ENCODE measurements at regions of chr11 and their contacts with region 1.

Region 1: GRCh38 chr11:102390667-102391465 is 43.9 kb downstream of the BIRC2 start:
- DNase-seq: no peak
- ATAC-seq: peak; percentile 93
- H3K4me3 ChIP-seq: no peak overlapping the region
- H3K27ac ChIP-seq: no peak overlapping the region
- H3K4me1 ChIP-seq: no peaks in the 10 kb centered on the region; the same call in 1 of the 2 replicates
- H3K27me3 ChIP-seq: no peaks in the 10 kb centered on the region
- CTCF ChIP-seq: peak; percentile 82 to 91 (median 89)
- EP300 ChIP-seq: no peak
- POLR2A ChIP-seq: no peak
- RAD21 ChIP-seq: peak; percentile 76

Region 2: GRCh38 chr11:102287964-102288724 is 102.7 kb before region 1 on chr11:
- CTCF ChIA-PET with region 1: interaction called, 21 read pairs
- POLR2A ChIA-PET with region 1: interaction called, 4 read pairs
- RAD21 ChIA-PET with region 1: interaction called, 6 read pairs
- SMC1A ChIA-PET with region 1: interaction called, 15 read pairs
- in situ Hi-C with region 1: no loop called
- intact Hi-C with region 1: no loop called
- DNase-seq: peak; percentile 78
- ATAC-seq: peak; percentile 94
- H3K4me3 ChIP-seq: peak overlapping the region; percentile 43; the same call in 1 of the 2 replicates
- H3K27ac ChIP-seq: no peak overlapping the region
- H3K4me1 ChIP-seq: no peaks in the 10 kb centered on the region
- H3K27me3 ChIP-seq: no peaks in the 10 kb centered on the region
- CTCF ChIP-seq: peak; percentile 62 to 83 (median 67)
- EP300 ChIP-seq: no peak
- POLR2A ChIP-seq: no peak
- RAD21 ChIP-seq: peak; percentile 84

Region 3: DNA sequence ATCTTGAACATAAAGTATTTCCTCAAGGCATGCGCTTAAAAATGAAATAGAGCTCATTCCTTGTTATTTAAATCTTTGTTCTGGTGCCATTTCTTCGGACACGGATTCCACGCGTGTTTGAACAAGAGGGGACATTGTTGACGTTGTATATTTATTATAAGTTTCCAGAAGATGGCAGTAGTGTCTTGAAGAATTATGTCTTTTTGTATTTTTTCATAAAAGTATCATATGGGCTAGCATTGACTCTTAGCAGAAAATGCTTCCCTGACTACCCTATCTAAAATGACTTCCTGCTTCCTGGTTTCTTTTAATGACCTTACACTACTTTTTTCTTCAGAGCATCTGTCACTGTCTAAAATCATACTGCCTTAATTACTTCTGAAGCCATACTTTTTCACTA is 23.5 kb before region 1 on chr11:
- CTCF ChIA-PET with region 1: interaction called, 33 read pairs
- POLR2A ChIA-PET with region 1: no interaction called
- RAD21 ChIA-PET with region 1: interaction called, 7 read pairs
- SMC1A ChIA-PET with region 1: interaction called, 7 read pairs
- in situ Hi-C with region 1: no loop called
- intact Hi-C with region 1: no loop called
- DNase-seq: no peak
- ATAC-seq: peak; percentile 58
- H3K4me3 ChIP-seq: no peak overlapping the region
- H3K27ac ChIP-seq: no peak overlapping the region
- H3K4me1 ChIP-seq: peaks cover 11% of the 10 kb centered on the region; the same call in 1 of the 2 replicates
- H3K27me3 ChIP-seq: no peaks in the 10 kb centered on the region
- CTCF ChIP-seq: peak; percentile 2 to 25 (median 17); a peak in 2 of 6 replicates
- EP300 ChIP-seq: no peak
- POLR2A ChIP-seq: no peak
- RAD21 ChIP-seq: peak; percentile 40; the same call in 1 of the 2 replicates

Region 4: DNA sequence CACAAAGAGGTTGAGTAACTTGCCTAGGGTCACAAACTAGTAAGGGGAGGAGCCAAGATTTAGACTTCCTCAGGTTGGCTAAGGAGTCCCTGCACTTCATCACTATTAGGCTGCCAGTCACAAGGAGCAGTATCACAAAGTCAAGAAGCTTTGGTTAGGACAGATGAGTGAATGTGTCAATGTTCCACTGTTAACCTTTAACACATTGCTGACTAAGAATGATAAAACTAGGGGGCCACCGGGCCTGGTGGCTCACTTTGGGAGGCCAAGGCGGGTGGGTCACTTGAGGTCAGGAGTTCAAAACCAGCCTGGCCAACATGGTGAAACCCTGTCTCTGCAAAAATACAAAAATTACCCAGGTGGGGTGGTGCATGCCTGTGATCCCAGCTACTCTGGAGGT is 29.7 kb after region 1 on chr11:
- CTCF ChIA-PET with region 1: interaction called, 18 read pairs
- POLR2A ChIA-PET with region 1: interaction called, 6 read pairs
- RAD21 ChIA-PET with region 1: interaction called, 8 read pairs
- SMC1A ChIA-PET with region 1: interaction called, 6 read pairs
- in situ Hi-C with region 1: no loop called
- intact Hi-C with region 1: no loop called
- DNase-seq: peak; percentile 40
- ATAC-seq: peak; percentile 83
- H3K4me3 ChIP-seq: no peak overlapping the region
- H3K27ac ChIP-seq: no peak overlapping the region
- H3K4me1 ChIP-seq: peaks cover 4% of the 10 kb centered on the region; the same call in 1 of the 2 replicates
- H3K27me3 ChIP-seq: no peaks in the 10 kb centered on the region
- CTCF ChIP-seq: no peak
- EP300 ChIP-seq: no peak
- POLR2A ChIP-seq: no peak
- RAD21 ChIP-seq: no peak

Region 5: DNA sequence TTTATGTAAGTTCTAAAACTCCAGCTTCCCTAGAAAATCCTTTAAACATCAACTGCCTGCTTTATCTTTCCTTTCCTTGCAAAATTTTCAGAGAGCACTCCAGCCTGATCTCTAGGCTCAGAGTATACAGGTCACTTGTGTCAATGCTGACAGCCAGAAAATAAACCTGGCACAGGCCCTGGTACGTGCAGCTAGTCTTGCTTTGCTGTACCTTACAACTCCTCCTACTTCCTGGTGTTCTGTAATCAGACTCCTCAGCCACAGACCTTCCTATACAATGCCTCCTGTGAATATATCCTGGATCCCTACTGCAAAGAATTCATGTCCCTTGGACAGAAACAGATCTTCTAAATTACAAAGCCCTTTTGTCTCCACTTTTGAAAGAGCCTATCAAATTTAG is 85.9 kb after region 1 on chr11:
- CTCF ChIA-PET with region 1: interaction called, 21 read pairs
- POLR2A ChIA-PET with region 1: no interaction called
- RAD21 ChIA-PET with region 1: interaction called, 7 read pairs
- SMC1A ChIA-PET with region 1: interaction called, 14 read pairs
- in situ Hi-C with region 1: loop called (anchors 25 kb)
- intact Hi-C with region 1: no loop called
- DNase-seq: no peak
- ATAC-seq: peak; percentile 29
- H3K4me3 ChIP-seq: no peak overlapping the region
- H3K27ac ChIP-seq: no peak overlapping the region
- H3K4me1 ChIP-seq: peaks cover 22% of the 10 kb centered on the region
- H3K27me3 ChIP-seq: no peaks in the 10 kb centered on the region
- CTCF ChIP-seq: no peak
- EP300 ChIP-seq: no peak
- POLR2A ChIP-seq: no peak
- RAD21 ChIP-seq: no peak

Region 6: GRCh38 chr11:102546923-102547471 is 156.1 kb after region 1 on chr11:
- CTCF ChIA-PET with region 1: interaction called, 10 read pairs
- POLR2A ChIA-PET with region 1: no interaction called
- RAD21 ChIA-PET with region 1: interaction called, 3 read pairs
- SMC1A ChIA-PET with region 1: interaction called, 3 read pairs
- in situ Hi-C with region 1: no loop called
- intact Hi-C with region 1: no loop called
- DNase-seq: peak; percentile 93
- ATAC-seq: peak; percentile 81
- H3K4me3 ChIP-seq: no peak overlapping the region
- H3K27ac ChIP-seq: peak overlapping the region; percentile 68; the same call in 1 of the 2 replicates
- H3K4me1 ChIP-seq: peaks cover 37% of the 10 kb centered on the region
- H3K27me3 ChIP-seq: no peaks in the 10 kb centered on the region
- CTCF ChIP-seq: peak in 1 of 3 experiments; percentile 3; a peak in 1 of 6 replicates
- EP300 ChIP-seq: peak; percentile 93 to 95; a peak in 3 of 4 replicates
- POLR2A ChIP-seq: no peak
- RAD21 ChIP-seq: peak; percentile 32; the same call in 1 of the 2 replicates

Measured in GM12878 (cell line).